AG04450 (cell line): ENCODE measurements at regions of chr4 and their contacts with region 1.

Region 1: GRCh38 chr4:81405894-81406401 is 65.8 kb downstream of the RASGEF1B start:
- DNase-seq: peak; percentile 30
- H3K4me3 ChIP-seq: no peak overlapping the region
- H3K27ac ChIP-seq: no peak overlapping the region
- H3K27me3 ChIP-seq: no peaks in the 10 kb centered on the region
- CTCF ChIP-seq: peak; percentile 81

Region 2: DNA sequence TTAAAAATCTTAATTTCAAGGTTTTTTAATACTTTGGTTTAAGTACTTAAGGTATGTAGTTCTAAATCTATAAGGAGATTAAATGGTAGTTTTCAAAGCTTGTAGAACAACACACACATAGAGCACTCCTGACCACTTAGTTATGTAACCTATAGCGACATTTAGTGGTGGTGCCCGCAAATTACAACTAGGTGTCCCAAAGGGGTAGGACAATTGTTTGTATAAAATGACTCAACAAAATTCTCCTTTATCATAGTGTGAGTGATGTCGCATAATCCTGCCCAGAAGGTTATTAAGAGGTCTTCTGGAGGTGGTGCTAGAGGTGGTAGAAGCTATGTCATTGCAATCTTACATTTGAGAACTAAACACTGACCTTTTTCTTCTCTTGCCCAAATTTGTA is 438.8 kb after region 1 on chr4:
- CTCF ChIA-PET with region 1: interaction called, 15 read pairs
- POLR2A ChIA-PET with region 1: no interaction called
- DNase-seq: no peak
- H3K4me3 ChIP-seq: no peak overlapping the region
- H3K27ac ChIP-seq: no peak overlapping the region
- H3K27me3 ChIP-seq: no peaks in the 10 kb centered on the region
- CTCF ChIP-seq: peak; percentile 50

Region 3: DNA sequence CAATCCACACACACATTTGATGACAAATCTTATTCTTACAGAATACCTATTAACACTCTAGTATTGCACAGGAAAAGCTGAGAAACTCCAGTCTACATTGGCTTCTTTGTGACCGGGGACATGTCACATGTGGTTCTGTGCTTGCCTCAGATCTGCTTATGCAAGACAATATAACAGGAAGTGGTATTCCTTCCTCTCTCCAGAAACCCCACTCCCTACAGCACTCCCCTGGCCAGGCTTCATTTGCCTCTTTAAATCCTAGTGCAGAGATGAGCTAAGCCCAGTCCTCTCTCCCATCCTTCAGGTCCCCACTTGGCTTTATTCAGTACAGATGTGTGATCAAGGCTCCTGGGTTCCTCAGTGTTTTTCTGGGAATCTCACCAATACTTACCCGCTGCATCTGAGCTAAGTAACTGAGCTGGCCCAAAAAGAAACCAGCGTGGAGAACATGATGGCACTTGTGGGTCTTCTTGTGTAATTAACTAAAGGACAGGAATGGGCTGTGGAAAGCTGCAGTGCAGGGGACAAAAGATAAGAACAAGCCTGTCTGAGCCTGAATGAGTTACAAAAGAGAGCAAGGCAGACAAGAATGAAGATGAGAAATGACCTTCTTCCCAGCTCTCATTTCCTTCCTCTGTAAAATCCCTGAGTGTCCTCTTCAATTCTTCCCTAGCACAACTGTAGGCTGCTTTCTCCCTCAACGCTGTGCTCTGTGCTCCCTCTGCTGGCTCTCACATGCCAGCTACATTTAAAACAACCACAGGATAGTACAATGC is 862.3 kb after region 1 on chr4:
- CTCF ChIA-PET with region 1: interaction called, 16 read pairs
- POLR2A ChIA-PET with region 1: no interaction called
- DNase-seq: peak; percentile 13
- H3K4me3 ChIP-seq: no peak overlapping the region
- H3K27ac ChIP-seq: no peak overlapping the region
- H3K27me3 ChIP-seq: no peaks in the 10 kb centered on the region
- CTCF ChIP-seq: peak; percentile 84